ENCODE measurements at regions of chr15 and their contacts with region 1.

Region 1: DNA sequence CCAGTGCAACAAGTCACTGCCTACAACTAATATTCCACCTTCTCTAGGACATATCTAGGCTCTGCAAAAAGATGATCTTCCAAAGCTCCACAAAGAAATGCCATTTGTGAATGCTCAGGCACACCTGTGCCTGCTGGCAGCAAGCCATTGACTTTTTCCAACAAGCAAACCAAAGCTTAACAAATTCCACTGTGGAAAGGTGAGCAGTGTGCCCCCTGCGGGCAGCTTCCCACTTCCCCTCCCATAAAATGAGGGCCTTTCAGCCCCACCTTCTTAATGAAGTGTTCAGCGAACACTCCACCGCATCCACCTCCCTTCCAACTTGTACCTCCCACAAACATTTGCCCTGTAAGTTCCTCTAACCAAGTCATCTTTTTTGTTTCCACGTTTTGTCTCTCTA is 157.5 kb upstream of the SLC24A5 start:
- DNase-seq: peak in 1 of 2 experiments; percentile 8
- H3K4me3 ChIP-seq: no peak overlapping the region
- H3K4me3 Mint-ChIP-seq: no peak overlapping the region
- H3K27ac Mint-ChIP-seq: no peak overlapping the region
- H3K4me1 ChIP-seq: no peaks in the 10 kb centered on the region
- H3K4me1 Mint-ChIP-seq: no peaks in the 10 kb centered on the region
- H3K27me3 ChIP-seq: no peaks in the 10 kb centered on the region
- H3K27me3 Mint-ChIP-seq: peaks cover 16% of the 10 kb centered on the region
- CTCF ChIP-seq: no peak

Region 2: GRCh38 chr15:47711654-47712053 is 251.6 kb before region 1 on chr15:
- CTCF ChIA-PET with region 1: interaction called, 3 read pairs
- POLR2A ChIA-PET with region 1: no interaction called
- intact Hi-C with region 1: loop called (anchors 1 kb)
- DNase-seq: no peak
- H3K4me3 ChIP-seq: no peak overlapping the region
- H3K4me3 Mint-ChIP-seq: no peak overlapping the region
- H3K27ac Mint-ChIP-seq: no peak overlapping the region
- H3K4me1 ChIP-seq: no peaks in the 10 kb centered on the region
- H3K4me1 Mint-ChIP-seq: no peaks in the 10 kb centered on the region
- H3K27me3 ChIP-seq: no peaks in the 10 kb centered on the region; the same call in 1 of the 2 replicates
- H3K27me3 Mint-ChIP-seq: peaks cover 13% of the 10 kb centered on the region
- CTCF ChIP-seq: peak; percentile 36 to 42

Region 3: GRCh38 chr15:48066456-48066855 is 103.2 kb after region 1 on chr15:
- CTCF ChIA-PET with region 1: no interaction called
- POLR2A ChIA-PET with region 1: no interaction called
- intact Hi-C with region 1: no loop called
- DNase-seq: no peak
- H3K4me3 ChIP-seq: no peak overlapping the region
- H3K4me3 Mint-ChIP-seq: no peak overlapping the region
- H3K27ac Mint-ChIP-seq: no peak overlapping the region
- H3K4me1 ChIP-seq: no peaks in the 10 kb centered on the region
- H3K4me1 Mint-ChIP-seq: no peaks in the 10 kb centered on the region
- H3K27me3 ChIP-seq: no peaks in the 10 kb centered on the region
- H3K27me3 Mint-ChIP-seq: peaks cover 14% of the 10 kb centered on the region
- CTCF ChIP-seq: no peak